Right ventricle myocardium inferior (tissue), 1 donor: ENCODE measurements at regions of chr11 and their contacts with region 1.

Region 1: DNA sequence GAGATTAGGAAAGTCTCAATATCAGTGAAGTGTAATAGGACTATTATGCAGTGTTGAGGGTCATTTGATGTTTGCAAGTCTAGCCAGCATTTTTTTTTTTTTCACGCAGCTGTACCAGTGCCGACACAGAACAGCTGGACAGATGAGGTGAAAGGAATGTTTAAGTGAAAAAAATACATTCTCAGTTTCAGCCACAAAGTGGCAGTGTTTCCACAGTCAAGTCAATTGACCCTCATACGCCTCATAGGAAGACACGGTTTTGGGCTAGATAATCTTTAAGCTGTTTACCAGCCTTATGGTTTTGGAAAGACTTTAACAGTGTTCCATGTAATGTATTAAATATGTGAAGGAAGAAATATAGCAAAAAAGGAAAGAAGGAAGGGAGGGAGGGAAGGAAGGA is 349.9 kb upstream of the ANO3 start:
- DNase-seq: no peak
- ATAC-seq: peak; percentile 73

Region 2: GRCh38 chr11:26021026-26021425 is 39.0 kb after region 1 on chr11:
- intact Hi-C with region 1: no loop called
- DNase-seq: no peak
- ATAC-seq: no peak

Region 3: DNA sequence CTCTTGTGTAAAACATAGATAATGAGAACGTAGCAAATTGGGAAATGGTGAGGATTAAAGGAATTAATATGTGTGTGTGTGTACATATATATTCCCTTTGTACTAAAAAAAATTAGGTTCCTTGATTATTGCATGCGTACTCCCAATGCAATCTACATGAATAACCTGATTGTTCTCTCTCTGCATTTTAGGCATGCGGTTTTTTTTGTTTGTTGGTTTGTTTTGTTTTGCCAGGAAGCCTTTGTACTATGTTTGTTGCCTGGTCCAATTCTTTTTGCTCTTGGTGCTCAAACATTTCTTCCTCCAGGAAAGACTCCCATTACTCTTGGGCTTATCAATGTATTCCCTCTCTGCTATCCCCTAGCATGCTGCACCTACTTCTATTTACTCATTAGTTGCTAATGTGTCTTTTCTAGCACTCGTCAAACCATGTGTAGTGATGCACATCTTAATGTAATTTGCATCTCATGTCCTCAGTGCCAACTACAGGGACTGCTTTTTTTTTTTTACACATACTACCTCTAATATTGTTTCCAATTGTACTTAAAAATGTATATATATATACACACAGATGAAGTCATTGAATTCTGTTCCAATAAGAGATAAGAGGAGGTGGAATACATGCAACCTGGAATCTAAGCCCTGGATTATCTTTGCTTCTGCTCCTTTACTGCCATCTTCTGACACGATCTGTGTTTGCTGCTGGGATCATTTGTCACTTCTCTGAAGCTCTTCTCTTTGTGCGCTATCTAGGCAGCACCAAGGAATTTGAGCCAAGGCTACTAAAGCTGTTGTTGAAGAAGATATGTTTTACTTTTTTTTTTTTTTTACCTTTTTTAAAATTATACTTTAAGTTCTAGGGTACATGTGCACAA is 152.7 kb after region 1 on chr11:
- intact Hi-C with region 1: loop called (anchors 1 kb)
- DNase-seq: no peak
- ATAC-seq: no peak

Region 4: DNA sequence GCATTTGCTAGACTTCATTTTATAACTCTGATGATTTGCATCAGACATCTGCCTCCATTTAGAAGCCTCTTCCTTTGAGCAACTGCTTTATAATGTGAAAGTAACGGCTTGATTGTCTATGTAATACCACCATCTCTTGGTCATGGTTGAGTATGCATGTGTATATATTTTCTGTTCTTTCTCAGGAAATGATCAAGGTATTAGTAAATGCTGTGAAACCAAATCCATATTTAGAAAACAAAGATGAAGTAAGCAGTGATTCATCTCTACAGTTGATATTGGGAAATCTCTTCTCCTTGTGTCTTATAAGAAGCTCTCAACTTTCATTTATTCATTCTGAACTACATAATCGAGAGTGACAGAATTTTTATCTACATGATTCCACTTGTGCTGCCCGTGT is 245.3 kb after region 1 on chr11:
- intact Hi-C with region 1: loop called (anchors 1 kb)
- DNase-seq: no peak
- ATAC-seq: peak; percentile 82

Region 5: GRCh38 chr11:26276798-26277424 is 294.9 kb after region 1 on chr11:
- intact Hi-C with region 1: loop called (anchors 2 kb)
- DNase-seq: no peak
- ATAC-seq: peak; percentile 39

Region 6: GRCh38 chr11:26319906-26320305 is 337.9 kb after region 1 on chr11:
- intact Hi-C with region 1: no loop called
- DNase-seq: no peak
- ATAC-seq: no peak